Aorta (tissue), 5 donors: ENCODE measurements at regions of chr11 and their contacts with region 1.

Region 1: GRCh38 chr11:74255741-74256369 is 55.6 kb downstream of the P4HA3 start:
- DNase-seq: peak in 1 of 2 donors; percentile 55
- ATAC-seq: peak; percentile 72
- H3K4me3 ChIP-seq: no peak overlapping the region
- H3K27ac ChIP-seq: no peak overlapping the region
- H3K4me1 ChIP-seq: no peaks in the 10 kb centered on the region
- H3K27me3 ChIP-seq: no peaks in the 10 kb centered on the region

Region 2: GRCh38 chr11:73795925-73796632 is 459.8 kb before region 1 on chr11:
- intact Hi-C with region 1: no loop called
- DNase-seq: no peak
- ATAC-seq: no peak
- H3K4me3 ChIP-seq: no peak overlapping the region
- H3K27ac ChIP-seq: no peak overlapping the region
- H3K4me1 ChIP-seq: no peaks in the 10 kb centered on the region
- H3K27me3 ChIP-seq: no peaks in the 10 kb centered on the region

Region 3: DNA sequence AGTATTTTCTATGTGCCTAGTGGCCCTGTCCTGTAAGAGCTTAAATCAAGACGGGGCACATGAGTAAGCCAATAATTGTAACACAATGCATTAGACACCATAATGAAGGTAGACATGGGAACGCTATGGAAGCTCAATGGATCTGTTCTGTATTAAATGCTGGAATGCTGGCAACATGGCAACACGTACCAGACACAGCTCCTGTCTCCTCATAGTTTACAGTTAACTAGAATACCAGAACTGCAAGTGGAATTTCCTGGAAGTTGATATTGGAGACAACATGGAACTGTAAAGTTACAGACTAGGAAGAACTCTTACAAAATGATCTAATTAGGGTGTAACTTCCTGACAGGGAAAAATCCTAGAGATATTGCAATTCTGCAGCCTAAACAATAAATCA is 43.2 kb after region 1 on chr11:
- intact Hi-C with region 1: no loop called
- DNase-seq: no peak
- ATAC-seq: no peak
- H3K4me3 ChIP-seq: no peak overlapping the region
- H3K27ac ChIP-seq: no peak overlapping the region
- H3K4me1 ChIP-seq: no peaks in the 10 kb centered on the region
- H3K27me3 ChIP-seq: no peaks in the 10 kb centered on the region

Region 4: DNA sequence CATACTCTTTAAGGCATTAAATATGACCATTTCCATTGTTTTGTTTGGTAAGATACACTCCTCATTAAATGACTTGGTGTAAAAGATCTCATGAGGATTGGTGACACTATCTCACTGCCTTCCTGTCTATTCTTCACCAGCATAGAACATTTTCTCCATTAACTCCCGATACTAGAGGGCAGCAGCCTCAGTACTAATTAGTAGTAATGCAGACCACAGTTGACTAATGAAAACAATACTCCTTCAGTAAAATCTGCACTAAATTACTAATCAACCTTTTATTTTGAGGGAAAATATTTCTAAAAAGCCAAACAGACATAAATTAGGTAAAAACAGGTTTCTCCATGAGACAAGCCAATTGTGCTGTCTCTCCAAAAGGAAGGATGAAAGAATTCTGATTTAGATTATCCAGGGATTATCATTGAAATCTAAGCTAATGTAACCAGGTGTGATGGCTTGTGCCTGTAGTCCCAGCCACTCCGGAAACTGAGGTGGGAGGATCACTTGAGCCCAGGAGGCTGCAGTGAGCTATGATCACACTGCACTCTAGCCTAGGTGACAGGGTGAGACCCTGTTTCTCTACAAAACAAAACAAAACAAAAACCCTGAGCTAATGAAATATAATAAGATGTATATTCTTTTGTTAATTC is 132.9 kb after region 1 on chr11:
- intact Hi-C with region 1: loop called (anchors 5 kb)
- DNase-seq: no peak
- ATAC-seq: peak; percentile 77
- H3K4me3 ChIP-seq: no peak overlapping the region
- H3K27ac ChIP-seq: no peak overlapping the region
- H3K4me1 ChIP-seq: peaks cover 2% of the 10 kb centered on the region in 2 donors
- H3K27me3 ChIP-seq: no peaks in the 10 kb centered on the region

Region 5: DNA sequence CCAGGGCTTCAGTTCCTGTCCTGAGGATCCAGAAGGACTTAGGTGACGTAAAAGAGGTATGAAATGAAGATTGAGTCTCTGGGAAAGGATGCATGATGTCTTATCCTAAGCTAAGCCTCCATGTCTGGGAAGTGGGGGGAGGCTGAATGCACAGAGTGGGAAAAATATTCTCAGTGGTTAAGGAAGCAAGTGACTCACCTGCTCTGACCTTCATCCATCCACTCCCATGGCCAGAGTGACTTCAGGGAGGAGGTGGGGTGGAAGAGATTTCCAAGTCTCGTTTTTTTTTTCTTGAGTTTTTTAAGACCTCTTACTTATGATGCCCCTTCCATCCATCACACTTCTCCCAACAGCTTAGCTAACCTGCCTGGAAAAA is 304.1 kb after region 1 on chr11:
- intact Hi-C with region 1: loop called in 1 of 2 experiments (anchors 10 kb)
- DNase-seq: no peak
- ATAC-seq: no peak
- H3K4me3 ChIP-seq: no peak overlapping the region
- H3K27ac ChIP-seq: no peak overlapping the region
- H3K4me1 ChIP-seq: no peaks in the 10 kb centered on the region
- H3K27me3 ChIP-seq: no peaks in the 10 kb centered on the region

Region 6: GRCh38 chr11:74739546-74740270 is 483.9 kb after region 1 on chr11:
- intact Hi-C with region 1: loop called (anchors 10 kb)
- DNase-seq: peak in 1 of 2 donors; percentile 67
- ATAC-seq: peak; percentile 77
- H3K4me3 ChIP-seq: no peak overlapping the region
- H3K27ac ChIP-seq: no peak overlapping the region
- H3K4me1 ChIP-seq: no peaks in the 10 kb centered on the region
- H3K27me3 ChIP-seq: no peaks in the 10 kb centered on the region